Mammary epithelial cell (primary cell): ENCODE measurements at regions of chr7 and their contacts with region 1.

Region 1: GRCh38 chr7:901381-902154 is 25.2 kb downstream of the GET4 start:
- DNase-seq: peak; percentile 57
- H3K4me3 ChIP-seq: no peak overlapping the region
- H3K27ac ChIP-seq: no peak overlapping the region
- H3K4me1 ChIP-seq: peaks cover 3% of the 10 kb centered on the region
- H3K27me3 ChIP-seq: no peaks in the 10 kb centered on the region
- CTCF ChIP-seq: no peak

Region 2: GRCh38 chr7:1181640-1182039 is 280.1 kb after region 1 on chr7:
- CTCF ChIA-PET with region 1: no interaction called
- dilution Hi-C with region 1: no loop called
- in situ Hi-C with region 1: no loop called
- intact Hi-C with region 1: loop called (anchors 10 kb)
- DNase-seq: no peak
- H3K4me3 ChIP-seq: no peak overlapping the region
- H3K27ac ChIP-seq: no peak overlapping the region
- H3K4me1 ChIP-seq: no peaks in the 10 kb centered on the region
- H3K27me3 ChIP-seq: peaks cover 3% of the 10 kb centered on the region
- CTCF ChIP-seq: no peak

Region 3: DNA sequence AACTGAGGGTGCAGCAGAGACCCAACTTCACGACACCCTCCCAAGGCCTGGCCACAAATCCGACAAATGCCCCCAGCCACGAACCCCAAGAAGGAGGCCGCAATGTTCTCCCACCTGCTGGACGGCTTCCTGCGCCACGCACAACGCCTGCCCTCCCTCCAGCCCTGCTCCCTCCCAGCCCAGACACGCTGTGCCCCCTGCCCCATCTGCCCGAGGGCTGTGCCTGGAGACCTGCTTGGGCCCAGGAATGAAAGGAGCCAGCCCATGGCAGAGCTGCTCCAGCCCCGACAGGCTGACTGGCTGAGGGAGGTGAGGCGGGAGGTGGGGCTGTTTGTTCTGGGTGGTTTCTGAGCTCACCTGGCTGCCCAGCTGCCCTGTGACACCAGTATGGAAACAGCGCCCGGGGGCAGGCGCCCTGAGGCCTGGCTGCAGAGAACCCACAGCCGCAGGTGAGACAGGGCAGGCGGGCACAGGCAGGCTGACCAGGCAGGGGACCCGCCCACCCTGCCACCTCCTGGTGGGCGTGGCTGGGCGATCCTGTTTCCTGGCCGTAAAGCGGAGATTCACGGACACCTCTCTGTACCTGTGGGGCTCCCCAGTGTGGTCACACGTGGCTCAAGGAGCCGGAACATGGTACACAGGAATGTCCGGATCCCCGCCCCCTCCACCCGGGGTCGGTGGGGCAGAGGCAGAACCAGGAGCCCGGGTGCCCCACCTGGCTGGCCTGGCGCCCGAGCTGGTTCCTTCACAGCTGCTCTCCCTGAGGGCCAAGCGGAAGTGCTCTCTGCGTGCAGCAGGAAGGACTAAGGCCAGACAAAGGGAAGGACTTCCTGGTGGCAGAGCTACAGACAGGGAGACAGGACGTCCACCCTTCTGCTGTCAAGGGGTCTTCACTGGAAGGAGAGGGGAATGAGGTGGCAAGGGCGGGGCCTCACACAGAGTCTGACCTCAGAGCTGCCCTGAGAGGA is 553.7 kb after region 1 on chr7:
- CTCF ChIA-PET with region 1: no interaction called
- dilution Hi-C with region 1: no loop called
- in situ Hi-C with region 1: no loop called
- intact Hi-C with region 1: no loop called
- DNase-seq: peak; percentile 90
- H3K4me3 ChIP-seq: peak overlapping the region; percentile 29 to 57 (median 54)
- H3K27ac ChIP-seq: peak overlapping the region; percentile 42
- H3K4me1 ChIP-seq: peaks cover 64% of the 10 kb centered on the region
- H3K27me3 ChIP-seq: no peaks in the 10 kb centered on the region
- CTCF ChIP-seq: no peak